Caco-2 (cell line): ENCODE measurements at regions of chr9 and their contacts with region 1.

Region 1: GRCh38 chr9:136790927-136791641 is at the start of gene TMEM141:
- DNase-seq: peak; percentile 100
- H3K4me3 ChIP-seq: peak within 1 kb of the TSS; percentile 98
- H3K4me3 Mint-ChIP-seq: peak within 1 kb of the TSS; percentile 68
- H3K27ac Mint-ChIP-seq: peak within 1 kb of the TSS; percentile 84
- H3K4me1 ChIP-seq: peaks cover 47% of the 10 kb centered on the region
- H3K4me1 Mint-ChIP-seq: peaks cover 45% of the 10 kb centered on the region
- H3K27me3 ChIP-seq: no peaks in the 10 kb centered on the region
- H3K27me3 Mint-ChIP-seq: no peaks in the 10 kb centered on the region
- CTCF ChIP-seq: no peak
- total RNA-seq, gene TMEM141: 107 and 122 TPM in 2 replicates

Region 2: DNA sequence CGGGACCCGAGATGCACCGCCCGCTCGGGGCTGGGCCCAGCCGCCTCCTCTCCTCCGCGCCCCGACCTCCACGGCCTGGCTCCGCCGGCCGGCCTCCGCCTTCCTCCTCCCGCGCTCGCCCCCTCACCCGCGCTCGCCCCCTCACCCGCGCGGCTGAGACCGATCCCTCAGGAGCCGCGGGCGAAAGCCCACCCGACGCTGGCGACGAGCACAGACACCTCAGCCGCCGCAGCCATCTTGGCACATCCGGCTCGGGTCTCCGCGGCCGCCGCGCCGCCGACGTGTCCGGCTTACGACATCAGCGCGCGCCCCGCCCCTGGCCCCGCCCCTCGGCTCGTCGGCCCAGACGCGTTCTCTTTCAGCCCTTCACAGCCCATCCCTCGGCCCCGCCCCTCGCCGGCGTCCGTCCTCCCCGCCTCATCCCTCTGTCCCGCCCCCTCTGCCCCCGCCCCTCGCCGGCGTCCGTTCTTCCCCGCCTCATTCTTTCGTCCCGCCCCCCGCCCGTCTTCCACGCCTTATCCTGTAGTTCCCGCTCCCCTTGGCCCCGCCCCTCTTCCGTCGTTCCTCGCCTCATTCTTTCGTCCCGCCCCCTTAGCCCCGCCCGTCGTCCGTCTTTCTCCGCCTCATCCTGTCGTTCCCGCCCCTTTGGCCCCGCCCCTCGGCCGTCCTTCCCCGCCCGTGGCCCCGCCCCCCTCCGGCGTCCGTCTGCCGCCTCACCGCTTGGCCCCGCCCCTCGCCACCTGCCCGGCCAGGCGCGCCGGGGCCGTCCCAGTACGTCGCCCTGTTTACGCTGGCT is 308.1 kb before region 1 on chr9 and contains the start of gene SEC16A:
- CTCF ChIA-PET with region 1: no interaction called
- POLR2A ChIA-PET with region 1: no interaction called
- intact Hi-C with region 1: loop called (anchors 5 kb)
- DNase-seq: peak; percentile 99
- H3K4me3 ChIP-seq: peak within 1 kb of the TSS; percentile 85
- H3K4me3 Mint-ChIP-seq: peak within 1 kb of the TSS; percentile 98
- H3K27ac Mint-ChIP-seq: peak within 1 kb of the TSS; percentile 100
- H3K4me1 ChIP-seq: peaks cover 16% of the 10 kb centered on the region
- H3K4me1 Mint-ChIP-seq: peaks cover 6% of the 10 kb centered on the region
- H3K27me3 ChIP-seq: no peaks in the 10 kb centered on the region
- H3K27me3 Mint-ChIP-seq: no peaks in the 10 kb centered on the region
- CTCF ChIP-seq: no peak
- total RNA-seq, gene SEC16A: 76.4 and 81.3 TPM in 2 replicates

Region 3: GRCh38 chr9:136728080-136728547 is 63.0 kb before region 1 on chr9:
- CTCF ChIA-PET with region 1: no interaction called
- POLR2A ChIA-PET with region 1: no interaction called
- intact Hi-C with region 1: loop called (anchors 2 kb)
- DNase-seq: peak; percentile 88 to 95
- H3K4me3 ChIP-seq: peak overlapping the region; percentile 99
- H3K4me3 Mint-ChIP-seq: peak overlapping the region; percentile 97
- H3K27ac Mint-ChIP-seq: peak overlapping the region; percentile 100
- H3K4me1 ChIP-seq: peaks cover 17% of the 10 kb centered on the region
- H3K4me1 Mint-ChIP-seq: peaks cover 10% of the 10 kb centered on the region
- H3K27me3 ChIP-seq: no peaks in the 10 kb centered on the region
- H3K27me3 Mint-ChIP-seq: no peaks in the 10 kb centered on the region
- CTCF ChIP-seq: peak; percentile 83 to 89

Region 4: GRCh38 chr9:136858844-136859757 is 68.0 kb after region 1 on chr9:
- CTCF ChIA-PET with region 1: no interaction called
- POLR2A ChIA-PET with region 1: no interaction called
- intact Hi-C with region 1: no loop called
- DNase-seq: peak in 1 of 2 experiments; percentile 61
- H3K4me3 ChIP-seq: no peak overlapping the region
- H3K4me3 Mint-ChIP-seq: peak overlapping the region; percentile 35
- H3K27ac Mint-ChIP-seq: peak overlapping the region; percentile 59
- H3K4me1 ChIP-seq: peaks cover 10% of the 10 kb centered on the region
- H3K4me1 Mint-ChIP-seq: no peaks in the 10 kb centered on the region
- H3K27me3 ChIP-seq: no peaks in the 10 kb centered on the region
- H3K27me3 Mint-ChIP-seq: no peaks in the 10 kb centered on the region
- CTCF ChIP-seq: no peak

Region 5: DNA sequence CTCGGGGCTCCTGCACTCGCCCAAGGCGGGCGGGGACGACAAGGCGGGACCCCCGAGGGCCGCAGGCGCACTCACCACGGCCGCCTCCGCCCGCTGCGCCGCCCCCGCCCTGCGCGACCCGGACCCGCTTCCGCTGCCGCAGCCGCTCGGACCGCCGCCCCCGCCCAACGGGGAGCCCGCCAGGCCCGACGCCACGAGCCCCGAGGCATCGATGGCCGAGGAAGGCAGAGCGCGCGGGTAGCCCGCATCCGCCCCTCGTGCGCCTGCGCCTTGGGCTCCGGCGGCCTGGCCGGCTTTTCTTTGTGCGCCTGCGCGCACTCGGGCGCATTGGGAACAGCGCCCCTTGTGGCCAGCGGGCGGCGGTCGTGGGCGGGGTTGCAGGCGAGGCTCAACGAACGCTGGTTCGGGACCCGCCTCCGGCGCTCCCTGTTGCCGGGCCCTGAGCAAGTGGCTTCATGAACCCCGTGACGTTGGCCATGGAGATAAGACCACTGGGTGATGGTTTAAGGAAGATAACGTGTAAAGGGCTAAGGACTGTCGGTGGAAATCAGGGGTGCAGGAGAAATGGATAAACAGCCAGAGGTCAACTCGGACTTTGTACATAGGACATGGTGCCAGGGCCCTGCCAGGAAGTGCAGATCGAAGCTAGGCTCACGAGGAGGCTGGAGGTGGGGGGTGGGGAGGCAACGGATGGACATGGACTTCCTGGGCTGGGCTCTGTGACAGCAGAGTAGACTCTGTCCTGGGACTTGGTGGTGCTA is 153.6 kb after region 1 on chr9 and contains the starts of genes C8G and FBXW5:
- CTCF ChIA-PET with region 1: no interaction called
- POLR2A ChIA-PET with region 1: no interaction called
- intact Hi-C with region 1: loop called (anchors 5 kb)
- DNase-seq: peak; percentile 93 to 97
- H3K4me3 ChIP-seq: peak within 1 kb of the TSS; percentile 59
- H3K4me3 Mint-ChIP-seq: peak within 1 kb of the TSS; percentile 71
- H3K27ac Mint-ChIP-seq: peak within 1 kb of the TSS; percentile 48
- H3K4me1 ChIP-seq: peaks cover 44% of the 10 kb centered on the region
- H3K4me1 Mint-ChIP-seq: no peaks in the 10 kb centered on the region
- H3K27me3 ChIP-seq: no peaks in the 10 kb centered on the region
- H3K27me3 Mint-ChIP-seq: no peaks in the 10 kb centered on the region
- CTCF ChIP-seq: peak; percentile 92 to 96
- total RNA-seq, gene C8G: 0.77 and 1.3 TPM in 2 replicates
- total RNA-seq, gene FBXW5: 66.8 and 76.1 TPM in 2 replicates